ENCODE measurements at regions of chr12 and their contacts with region 1.

Region 1: GRCh38 chr12:110888256-110888991 is 32.0 kb downstream of the MYL2 start:
- DNase-seq: no peak
- ATAC-seq: no peak
- H3K4me3 ChIP-seq: peak overlapping the region; percentile 59
- H3K4me3 Mint-ChIP-seq: peak overlapping the region; percentile 89
- H3K27ac ChIP-seq: no peak overlapping the region
- H3K27ac Mint-ChIP-seq: peak overlapping the region in 1 of 2 donors; percentile 91
- H3K4me1 ChIP-seq: peaks cover 11% of the 10 kb centered on the region
- H3K4me1 Mint-ChIP-seq: peaks cover 6 to 7% of the 10 kb centered on the region in 2 donors
- H3K27me3 ChIP-seq: no peaks in the 10 kb centered on the region
- H3K27me3 Mint-ChIP-seq: peaks cover 0 to 3% of the 10 kb centered on the region in 2 donors
- CTCF ChIP-seq: peak; percentile 59

Region 2: DNA sequence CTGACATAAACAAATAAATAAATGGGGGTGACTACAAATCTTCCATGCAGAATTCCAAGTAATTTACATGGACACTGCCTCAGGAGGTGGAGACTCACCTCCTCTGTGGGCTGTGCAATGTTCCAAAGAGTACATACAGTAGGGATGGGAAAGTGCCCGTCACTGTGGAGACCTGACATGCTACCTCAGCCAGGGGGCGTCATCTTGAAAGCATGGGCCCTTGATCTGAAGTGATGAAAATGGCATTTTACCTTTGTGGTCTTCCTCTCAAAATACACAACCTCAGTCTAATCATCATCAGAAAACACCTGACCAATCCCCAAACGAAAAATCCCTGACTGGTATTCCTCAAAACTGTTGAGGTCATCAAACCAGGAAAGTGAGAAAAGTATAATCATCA is 533.4 kb before region 1 on chr12:
- intact Hi-C with region 1: loop called (anchors 10 kb)
- DNase-seq: peak in 1 of 2 donors; percentile 61
- ATAC-seq: peak in 2 of 3 donors; percentile 34 to 62
- H3K4me3 ChIP-seq: no peak overlapping the region
- H3K4me3 Mint-ChIP-seq: no peak overlapping the region
- H3K27ac ChIP-seq: no peak overlapping the region
- H3K27ac Mint-ChIP-seq: no peak overlapping the region
- H3K4me1 ChIP-seq: peaks cover under 1% of the 10 kb centered on the region
- H3K4me1 Mint-ChIP-seq: peaks cover 17 to 19% of the 10 kb centered on the region in 2 donors
- H3K27me3 ChIP-seq: no peaks in the 10 kb centered on the region
- H3K27me3 Mint-ChIP-seq: peaks cover 0 to 3% of the 10 kb centered on the region in 2 donors
- CTCF ChIP-seq: peak; percentile 29

Region 3: GRCh38 chr12:110513842-110514241 is 374.6 kb before region 1 on chr12:
- intact Hi-C with region 1: loop called (anchors 5 kb)
- DNase-seq: no peak
- ATAC-seq: no peak
- H3K4me3 ChIP-seq: no peak overlapping the region
- H3K4me3 Mint-ChIP-seq: no peak overlapping the region
- H3K27ac ChIP-seq: no peak overlapping the region
- H3K27ac Mint-ChIP-seq: no peak overlapping the region
- H3K4me1 ChIP-seq: no peaks in the 10 kb centered on the region
- H3K4me1 Mint-ChIP-seq: no peaks in the 10 kb centered on the region
- H3K27me3 ChIP-seq: no peaks in the 10 kb centered on the region
- H3K27me3 Mint-ChIP-seq: no peaks in the 10 kb centered on the region
- CTCF ChIP-seq: no peak

Measured in natural killer cell (primary cell).